Vagina (tissue), 2 donors: ENCODE measurements at regions of chr5 and their contacts with region 1.

Region 1: GRCh38 chr5:142548739-142549275 is 137.1 kb downstream of the FGF1 start:
- DNase-seq: no peak
- H3K4me3 ChIP-seq: no peak overlapping the region
- H3K27ac ChIP-seq: no peak overlapping the region
- H3K4me1 ChIP-seq: peaks cover 10% of the 10 kb centered on the region
- H3K27me3 ChIP-seq: no peaks in the 10 kb centered on the region
- CTCF ChIP-seq: peak; percentile 37 to 76 (median 66)
- POLR2A ChIP-seq: no peak

Region 2: GRCh38 chr5:142175039-142175438 is 373.8 kb before region 1 on chr5:
- intact Hi-C with region 1: loop called (anchors 10 kb)
- DNase-seq: no peak
- H3K4me3 ChIP-seq: no peak overlapping the region
- H3K27ac ChIP-seq: no peak overlapping the region
- H3K4me1 ChIP-seq: no peaks in the 10 kb centered on the region
- H3K27me3 ChIP-seq: no peaks in the 10 kb centered on the region
- CTCF ChIP-seq: no peak
- POLR2A ChIP-seq: no peak

Region 3: GRCh38 chr5:142472300-142472951 is 76.4 kb before region 1 on chr5:
- intact Hi-C with region 1: no loop called
- DNase-seq: no peak
- H3K4me3 ChIP-seq: no peak overlapping the region
- H3K27ac ChIP-seq: no peak overlapping the region
- H3K4me1 ChIP-seq: no peaks in the 10 kb centered on the region
- H3K27me3 ChIP-seq: no peaks in the 10 kb centered on the region
- CTCF ChIP-seq: no peak
- POLR2A ChIP-seq: no peak

Region 4: GRCh38 chr5:142611154-142611553 is 62.3 kb after region 1 on chr5:
- intact Hi-C with region 1: no loop called
- DNase-seq: no peak
- H3K4me3 ChIP-seq: no peak overlapping the region
- H3K27ac ChIP-seq: no peak overlapping the region
- H3K4me1 ChIP-seq: no peaks in the 10 kb centered on the region
- H3K27me3 ChIP-seq: no peaks in the 10 kb centered on the region
- CTCF ChIP-seq: peak; percentile 60 to 77 (median 75)
- POLR2A ChIP-seq: no peak